Activated T-helper 2 cell treated with anti-CD3 and anti-CD28 coated beads, Interferon-gamma antibody, Interleukin-2, Interleukin-4, amounts not matched to agents 10 μg/mL and 5 μg/mL and 100 μg/mL, durations not matched to agents 14 hours and 24 hours and 36 hours (primary cell): ENCODE measurements at regions of chr13 and their contacts with region 1.

Region 1: DNA sequence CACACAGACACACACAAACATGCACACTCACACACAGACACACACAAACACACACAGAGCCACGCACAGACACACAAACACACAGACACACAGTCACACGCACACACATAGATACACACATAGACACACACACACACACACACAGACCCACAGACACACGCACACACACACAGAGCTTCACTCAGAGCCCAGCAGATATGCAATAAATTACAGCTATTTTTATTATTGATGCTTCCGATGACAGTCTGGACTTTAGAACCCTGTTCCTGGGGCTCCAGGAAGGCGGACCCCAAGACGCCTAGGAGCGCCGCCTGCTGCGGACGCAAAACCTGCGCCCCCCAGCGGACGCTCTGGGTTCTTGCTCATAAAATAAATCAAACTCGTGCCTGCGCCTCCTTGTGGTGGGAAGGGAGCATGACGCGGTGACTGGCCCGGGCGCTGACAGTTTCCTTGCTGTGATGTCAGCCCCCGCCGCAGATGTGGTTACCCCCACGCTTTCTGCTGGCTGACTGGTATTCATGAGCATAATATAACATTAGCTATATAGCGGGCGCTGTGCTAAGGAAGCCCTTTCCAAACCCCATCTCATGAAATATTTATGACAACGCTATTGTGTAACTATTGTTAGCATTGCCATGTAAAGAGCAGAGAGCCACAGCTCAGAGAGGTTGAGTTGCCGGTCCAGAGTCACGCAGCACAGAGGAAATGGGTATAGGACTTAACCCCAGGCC is 64.4 kb upstream of the TM9SF2 start:
- DNase-seq: peak; percentile 91
- H3K4me3 Mint-ChIP-seq: peak overlapping the region; percentile 40
- H3K27ac Mint-ChIP-seq: peak overlapping the region; percentile 56
- H3K4me1 Mint-ChIP-seq: peaks cover 63% of the 10 kb centered on the region
- H3K27me3 Mint-ChIP-seq: peaks cover 24% of the 10 kb centered on the region

Region 2: DNA sequence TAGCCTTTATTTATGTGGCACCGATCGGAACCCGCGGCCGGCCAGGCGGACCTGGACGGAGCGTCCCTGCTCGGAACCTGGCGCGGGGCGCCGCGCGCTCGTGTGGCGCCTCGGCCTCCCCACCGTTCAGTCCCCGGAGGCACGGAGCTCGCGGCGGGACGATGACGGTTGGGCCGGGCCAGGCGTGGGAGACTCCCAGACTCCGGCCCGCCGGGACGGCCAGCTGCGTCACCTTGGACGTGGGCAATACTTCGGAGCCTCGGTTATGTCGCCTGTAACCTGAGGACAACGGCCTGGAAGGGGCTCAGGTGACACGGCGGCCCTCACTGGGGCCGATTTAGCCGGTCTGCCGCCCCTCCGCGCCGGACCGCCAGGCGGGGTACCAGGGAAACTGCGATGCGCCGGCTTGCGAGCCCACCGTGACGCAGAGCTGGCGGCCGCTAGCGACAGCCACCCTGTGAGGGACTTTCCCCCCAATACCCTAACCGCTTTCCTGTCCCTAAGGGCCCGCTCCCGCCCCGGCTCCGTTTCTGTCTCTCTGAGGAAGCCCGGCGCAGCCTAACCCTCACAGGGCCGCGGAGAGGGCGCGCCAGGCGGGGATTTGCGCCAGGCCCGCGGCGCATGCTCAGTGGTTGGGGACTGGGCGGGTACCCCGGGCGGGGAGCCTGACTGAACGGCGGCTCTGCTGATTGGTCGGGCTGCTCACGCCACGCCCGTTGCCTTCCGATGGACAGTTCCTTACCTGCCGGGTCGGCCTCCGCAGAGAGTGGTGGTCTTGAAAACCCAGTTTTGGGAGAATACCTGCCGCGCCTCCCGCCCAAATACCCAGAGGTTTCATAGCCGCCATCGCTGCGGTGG is 349.5 kb before region 1 on chr13:
- intact Hi-C with region 1: loop called (anchors 10 kb)
- DNase-seq: peak; percentile 91
- H3K4me3 Mint-ChIP-seq: peak overlapping the region; percentile 92
- H3K27ac Mint-ChIP-seq: peak overlapping the region; percentile 93
- H3K4me1 Mint-ChIP-seq: peaks cover 33% of the 10 kb centered on the region
- H3K27me3 Mint-ChIP-seq: no peaks in the 10 kb centered on the region

Region 3: GRCh38 chr13:99269627-99270241 is 167.1 kb before region 1 on chr13:
- intact Hi-C with region 1: loop called (anchors 1 kb)
- DNase-seq: no peak
- H3K4me3 Mint-ChIP-seq: no peak overlapping the region
- H3K27ac Mint-ChIP-seq: no peak overlapping the region
- H3K4me1 Mint-ChIP-seq: peaks cover 54% of the 10 kb centered on the region
- H3K27me3 Mint-ChIP-seq: no peaks in the 10 kb centered on the region

Region 4: DNA sequence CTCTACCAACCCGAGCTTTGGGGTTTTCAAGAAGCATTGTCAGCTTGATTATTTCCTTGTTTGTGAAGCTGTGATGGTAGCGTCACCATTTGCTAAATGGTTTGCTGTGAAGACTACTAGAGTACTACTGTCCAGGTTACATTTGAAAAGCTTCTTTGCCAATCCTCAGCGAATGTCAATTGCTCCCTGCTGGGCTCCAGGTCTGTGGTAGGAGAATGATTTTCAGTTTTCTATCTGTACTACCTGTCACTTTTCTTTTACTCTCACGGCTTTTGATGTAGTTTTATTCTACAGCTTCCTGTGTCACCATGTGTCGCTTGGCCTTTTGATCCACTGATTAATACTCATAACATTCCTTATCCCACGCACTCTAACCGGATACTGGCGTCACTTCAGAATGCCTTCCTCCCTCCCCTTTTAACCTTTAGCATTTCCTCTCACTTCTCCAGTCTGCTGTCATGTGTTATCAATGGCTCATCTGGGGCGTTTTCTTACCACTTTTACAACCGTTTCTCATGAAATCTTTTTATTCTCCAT is 122.1 kb before region 1 on chr13:
- intact Hi-C with region 1: loop called (anchors 2 kb)
- DNase-seq: peak; percentile 63
- H3K4me3 Mint-ChIP-seq: peak overlapping the region; percentile 72
- H3K27ac Mint-ChIP-seq: peak overlapping the region; percentile 96
- H3K4me1 Mint-ChIP-seq: peaks cover 70% of the 10 kb centered on the region
- H3K27me3 Mint-ChIP-seq: no peaks in the 10 kb centered on the region

Region 5: GRCh38 chr13:99386911-99387788 is 49.7 kb before region 1 on chr13:
- intact Hi-C with region 1: loop called (anchors 1 kb)
- DNase-seq: peak; percentile 73
- H3K4me3 Mint-ChIP-seq: no peak overlapping the region
- H3K27ac Mint-ChIP-seq: peak overlapping the region; percentile 70
- H3K4me1 Mint-ChIP-seq: peaks cover 54% of the 10 kb centered on the region
- H3K27me3 Mint-ChIP-seq: no peaks in the 10 kb centered on the region

Region 6: GRCh38 chr13:99425485-99426341 is 11.1 kb before region 1 on chr13:
- intact Hi-C with region 1: loop called (anchors 1 kb)
- DNase-seq: peak; percentile 41
- H3K4me3 Mint-ChIP-seq: peak overlapping the region; percentile 80
- H3K27ac Mint-ChIP-seq: peak overlapping the region; percentile 94
- H3K4me1 Mint-ChIP-seq: peaks cover 56% of the 10 kb centered on the region
- H3K27me3 Mint-ChIP-seq: no peaks in the 10 kb centered on the region